Activated CD4-positive, alpha-beta T cell treated with anti-CD3 and anti-CD28 coated beads, Interleukin-2, amount 10 ng/mL, durations not matched to agents 7 days and 5 days (primary cell): ENCODE measurements at regions of chr7 and their contacts with region 1.

Region 1: GRCh38 chr7:50376056-50376823 is 71.7 kb downstream of the IKZF1 start:
- DNase-seq: peak; percentile 5
- H3K4me3 Mint-ChIP-seq: no peak overlapping the region
- H3K27ac Mint-ChIP-seq: peak overlapping the region; percentile 71
- H3K4me1 Mint-ChIP-seq: peaks cover 90% of the 10 kb centered on the region
- H3K27me3 Mint-ChIP-seq: no peaks in the 10 kb centered on the region

Region 2: DNA sequence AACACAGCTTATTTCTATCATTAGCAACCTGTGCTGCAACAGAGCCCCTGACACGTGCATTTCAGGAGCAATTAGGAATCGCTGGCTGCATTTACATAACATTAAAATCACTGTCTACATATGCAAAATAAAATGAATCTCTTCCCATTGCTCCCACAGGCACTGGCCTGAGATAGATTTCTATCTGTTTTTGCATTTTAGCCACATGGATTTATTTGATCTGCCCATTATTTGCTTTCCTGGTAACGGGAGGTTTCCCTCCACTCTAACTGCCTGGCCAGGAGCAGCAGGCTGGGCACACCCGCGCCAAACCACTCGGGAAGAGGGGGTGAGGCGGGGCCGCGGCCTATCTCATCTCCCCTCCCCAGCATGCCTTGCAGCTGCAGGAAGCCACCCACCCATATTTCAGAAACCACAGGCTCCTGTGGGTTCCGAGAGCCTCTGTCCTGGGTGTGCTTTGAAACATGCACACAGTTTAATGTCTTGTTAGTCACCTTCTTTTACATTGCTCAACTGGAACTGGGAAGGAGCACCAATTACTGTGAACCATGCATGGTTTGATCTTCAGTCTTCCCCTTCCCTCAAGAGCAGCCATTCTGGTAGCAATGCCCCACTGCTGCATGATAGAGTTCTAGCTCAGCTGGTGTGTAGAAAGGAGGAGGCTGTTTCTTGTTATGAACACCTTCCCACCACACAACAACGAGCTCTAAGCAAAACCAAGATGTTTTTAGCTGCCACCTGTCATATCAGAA is 109.4 kb before region 1 on chr7:
- CTCF ChIA-PET with region 1: no interaction called
- POLR2A ChIA-PET with region 1: no interaction called
- DNase-seq: peak; percentile 88
- H3K4me3 Mint-ChIP-seq: peak overlapping the region; percentile 52
- H3K27ac Mint-ChIP-seq: peak overlapping the region; percentile 98
- H3K4me1 Mint-ChIP-seq: peaks cover 93% of the 10 kb centered on the region
- H3K27me3 Mint-ChIP-seq: no peaks in the 10 kb centered on the region

Region 3: GRCh38 chr7:50335795-50336754 is 40.2 kb before region 1 on chr7:
- CTCF ChIA-PET with region 1: no interaction called
- POLR2A ChIA-PET with region 1: no interaction called
- DNase-seq: peak; percentile 81
- H3K4me3 Mint-ChIP-seq: no peak overlapping the region
- H3K27ac Mint-ChIP-seq: no peak overlapping the region
- H3K4me1 Mint-ChIP-seq: no peaks in the 10 kb centered on the region
- H3K27me3 Mint-ChIP-seq: no peaks in the 10 kb centered on the region

Region 4: GRCh38 chr7:50387351-50387750 is 11.1 kb after region 1 on chr7:
- CTCF ChIA-PET with region 1: interaction called, 12 read pairs
- POLR2A ChIA-PET with region 1: no interaction called
- DNase-seq: no peak
- H3K4me3 Mint-ChIP-seq: no peak overlapping the region
- H3K27ac Mint-ChIP-seq: no peak overlapping the region
- H3K4me1 Mint-ChIP-seq: peaks cover 76% of the 10 kb centered on the region
- H3K27me3 Mint-ChIP-seq: no peaks in the 10 kb centered on the region

Region 5: DNA sequence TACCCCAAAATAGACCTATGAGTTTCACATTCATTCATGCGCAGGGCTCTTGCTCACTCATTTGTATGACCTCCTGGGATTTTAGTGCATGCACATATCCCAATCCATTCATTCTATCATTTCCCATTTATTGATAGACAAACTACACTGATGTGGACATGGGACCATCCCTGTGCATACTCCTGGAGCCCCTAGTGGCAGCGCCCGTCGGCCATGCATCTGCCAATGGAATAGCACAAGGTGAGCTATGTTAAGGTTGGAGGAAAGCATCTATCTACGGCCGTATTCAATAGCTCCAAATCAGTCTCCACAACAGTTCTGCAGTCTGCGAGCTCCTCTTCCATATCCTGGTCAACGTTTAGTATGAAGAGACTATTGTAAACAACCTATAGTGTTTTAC is 105.6 kb after region 1 on chr7:
- CTCF ChIA-PET with region 1: no interaction called
- POLR2A ChIA-PET with region 1: no interaction called
- DNase-seq: no peak
- H3K4me3 Mint-ChIP-seq: no peak overlapping the region
- H3K27ac Mint-ChIP-seq: no peak overlapping the region
- H3K4me1 Mint-ChIP-seq: no peaks in the 10 kb centered on the region
- H3K27me3 Mint-ChIP-seq: peaks cover 14% of the 10 kb centered on the region